ENCODE measurements at regions of chr16 and their contacts with region 1.

Region 1: GRCh38 chr16:51818342-51818944 is 667.4 kb upstream of the SALL1 start:
- DNase-seq: peak in 2 of 3 donors; percentile 18 to 72
- ATAC-seq: no peak
- H3K4me3 ChIP-seq: no peak overlapping the region
- H3K27ac ChIP-seq: no peak overlapping the region
- H3K4me1 ChIP-seq: no peaks in the 10 kb centered on the region
- H3K27me3 ChIP-seq: no peaks in the 10 kb centered on the region

Region 2: DNA sequence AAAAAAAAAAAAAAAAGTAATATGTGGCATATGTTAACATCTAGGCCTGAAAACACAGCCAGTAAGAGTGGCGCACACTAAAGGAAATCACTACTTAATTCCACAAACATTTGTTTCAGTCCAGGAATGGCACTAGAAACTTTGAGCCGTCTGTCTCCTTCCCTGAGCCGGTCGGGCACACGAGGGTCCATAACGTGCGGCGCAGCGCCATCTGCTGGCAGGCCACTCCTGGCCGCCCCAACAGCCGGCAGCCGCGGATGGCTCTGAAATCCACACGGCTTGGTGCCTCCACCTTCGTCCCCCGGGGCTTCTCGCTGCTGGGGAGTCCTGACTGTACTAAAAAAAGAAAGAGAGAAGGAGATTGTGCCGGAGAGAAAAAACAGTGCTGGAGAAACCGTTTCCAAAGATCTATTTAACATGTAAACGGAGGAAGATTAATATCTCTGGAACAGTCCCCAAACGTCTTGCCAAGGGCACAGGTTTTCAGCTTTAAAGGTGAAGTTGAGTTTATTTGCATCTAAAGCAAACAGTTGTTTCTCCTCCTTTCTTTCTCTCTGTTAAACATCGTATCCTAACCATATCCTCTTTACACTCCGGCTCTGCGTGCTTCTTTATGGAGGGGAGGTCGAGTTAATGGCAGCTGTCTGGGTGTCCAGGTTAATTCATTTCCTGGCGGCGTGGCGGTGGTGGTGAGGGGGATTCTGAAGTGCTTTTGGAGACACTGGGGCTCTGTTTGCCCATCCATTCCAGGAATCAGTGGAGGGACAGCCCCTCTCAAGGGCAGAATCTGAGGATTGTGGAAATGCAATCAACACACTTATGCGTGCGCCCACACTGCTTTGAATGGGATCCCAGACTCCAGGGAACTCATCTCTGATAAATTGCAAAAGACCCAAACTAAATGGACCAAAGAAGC is 56.1 kb before region 1 on chr16:
- intact Hi-C with region 1: no loop called
- DNase-seq: peak; percentile 78 to 92 (median 90)
- ATAC-seq: peak; percentile 91 to 96
- H3K4me3 ChIP-seq: no peak overlapping the region
- H3K27ac ChIP-seq: no peak overlapping the region
- H3K4me1 ChIP-seq: no peaks in the 10 kb centered on the region
- H3K27me3 ChIP-seq: no peaks in the 10 kb centered on the region

Region 3: GRCh38 chr16:51982715-51983680 is 164.6 kb after region 1 on chr16:
- intact Hi-C with region 1: loop called in 3 of 4 experiments (anchors 5 to 10 kb)
- DNase-seq: no peak
- ATAC-seq: peak; percentile 60 to 74
- H3K4me3 ChIP-seq: no peak overlapping the region
- H3K27ac ChIP-seq: no peak overlapping the region
- H3K4me1 ChIP-seq: no peaks in the 10 kb centered on the region
- H3K27me3 ChIP-seq: no peaks in the 10 kb centered on the region

Region 4: GRCh38 chr16:52090080-52090479 is 271.6 kb after region 1 on chr16:
- intact Hi-C with region 1: no loop called
- DNase-seq: no peak
- ATAC-seq: no peak
- H3K4me3 ChIP-seq: no peak overlapping the region
- H3K27ac ChIP-seq: no peak overlapping the region
- H3K4me1 ChIP-seq: no peaks in the 10 kb centered on the region
- H3K27me3 ChIP-seq: no peaks in the 10 kb centered on the region